Sigmoid colon (tissue), 7 donors: ENCODE measurements at regions of chr3 and their contacts with region 1.

Region 1: DNA sequence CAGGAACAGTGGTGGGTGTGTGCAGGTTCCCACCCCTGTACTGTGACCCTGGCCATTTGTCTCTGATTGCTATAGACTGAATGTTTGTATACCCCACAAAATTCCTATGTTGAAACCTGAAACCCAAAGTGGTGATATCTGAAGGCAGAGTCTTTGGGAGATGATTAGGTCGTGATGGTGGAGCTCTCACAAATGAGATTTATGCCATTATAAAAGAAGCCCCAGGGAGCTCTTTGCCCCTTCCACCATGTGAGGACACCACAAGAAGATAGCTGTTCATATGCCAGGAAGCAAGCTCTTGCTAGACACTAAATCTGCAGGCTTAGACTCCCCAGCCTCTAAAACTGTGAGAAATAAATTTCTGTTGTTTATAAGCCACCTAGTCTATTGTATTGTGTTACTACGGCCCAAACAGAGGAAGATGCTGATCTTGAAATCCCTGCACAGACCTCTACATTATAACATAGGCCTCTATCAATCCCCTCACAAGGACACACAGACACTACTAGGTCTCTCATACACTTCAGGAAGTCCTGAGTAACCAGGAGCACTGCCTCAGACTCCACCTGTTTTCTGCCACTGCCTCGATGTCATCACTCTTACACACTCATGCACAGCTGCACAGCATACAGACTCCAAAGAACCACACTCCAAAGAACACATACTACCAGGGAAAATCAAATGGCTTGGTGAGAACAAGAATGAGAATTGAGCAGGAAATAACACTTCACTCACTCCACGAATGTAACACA is 14.7 kb downstream of the IGSF11 start:
- DNase-seq: no peak
- H3K4me3 ChIP-seq: no peak overlapping the region
- H3K27ac ChIP-seq: peak overlapping the region; percentile 30 to 68 (median 50)
- H3K4me1 ChIP-seq: peaks cover 0 to 53% (median 7%) of the 10 kb centered on the region in 4 donors
- H3K27me3 ChIP-seq: no peaks in the 10 kb centered on the region
- CTCF ChIP-seq: no peak
- EP300 ChIP-seq: no peak
- POLR2A ChIP-seq: no peak

Region 2: GRCh38 chr3:118593277-118593670 is 426.7 kb before region 1 on chr3:
- intact Hi-C with region 1: no loop called
- DNase-seq: no peak
- H3K4me3 ChIP-seq: no peak overlapping the region
- H3K27ac ChIP-seq: no peak overlapping the region
- H3K4me1 ChIP-seq: no peaks in the 10 kb centered on the region
- H3K27me3 ChIP-seq: no peaks in the 10 kb centered on the region
- CTCF ChIP-seq: no peak
- EP300 ChIP-seq: no peak
- POLR2A ChIP-seq: no peak

Region 3: GRCh38 chr3:118987477-118987876 is 32.5 kb before region 1 on chr3:
- intact Hi-C with region 1: loop called (anchors 5 kb)
- DNase-seq: peak; percentile 85
- H3K4me3 ChIP-seq: no peak overlapping the region
- H3K27ac ChIP-seq: peak overlapping the region; percentile 57 to 71 (median 66)
- H3K4me1 ChIP-seq: peaks cover 0 to 53% (median 44%) of the 10 kb centered on the region in 4 donors
- H3K27me3 ChIP-seq: no peaks in the 10 kb centered on the region
- CTCF ChIP-seq: no peak
- EP300 ChIP-seq: no peak
- POLR2A ChIP-seq: no peak